Activated CD8-positive, alpha-beta memory T cell treated with anti-CD3 and anti-CD28 coated beads, Interleukin-2, amount 10 ng/mL, durations not matched to agents 7 days and 5 days (primary cell): ENCODE measurements at regions of chr3 and their contacts with region 1.

Region 1: GRCh38 chr3:99833617-99834205 is 16.0 kb downstream of the CMSS1 start:
- DNase-seq: no peak
- ATAC-seq: no peak
- H3K4me3 Mint-ChIP-seq: no peak overlapping the region
- H3K27ac Mint-ChIP-seq: no peak overlapping the region
- H3K4me1 Mint-ChIP-seq: peaks cover 10% of the 10 kb centered on the region
- H3K27me3 Mint-ChIP-seq: no peaks in the 10 kb centered on the region

Region 2: DNA sequence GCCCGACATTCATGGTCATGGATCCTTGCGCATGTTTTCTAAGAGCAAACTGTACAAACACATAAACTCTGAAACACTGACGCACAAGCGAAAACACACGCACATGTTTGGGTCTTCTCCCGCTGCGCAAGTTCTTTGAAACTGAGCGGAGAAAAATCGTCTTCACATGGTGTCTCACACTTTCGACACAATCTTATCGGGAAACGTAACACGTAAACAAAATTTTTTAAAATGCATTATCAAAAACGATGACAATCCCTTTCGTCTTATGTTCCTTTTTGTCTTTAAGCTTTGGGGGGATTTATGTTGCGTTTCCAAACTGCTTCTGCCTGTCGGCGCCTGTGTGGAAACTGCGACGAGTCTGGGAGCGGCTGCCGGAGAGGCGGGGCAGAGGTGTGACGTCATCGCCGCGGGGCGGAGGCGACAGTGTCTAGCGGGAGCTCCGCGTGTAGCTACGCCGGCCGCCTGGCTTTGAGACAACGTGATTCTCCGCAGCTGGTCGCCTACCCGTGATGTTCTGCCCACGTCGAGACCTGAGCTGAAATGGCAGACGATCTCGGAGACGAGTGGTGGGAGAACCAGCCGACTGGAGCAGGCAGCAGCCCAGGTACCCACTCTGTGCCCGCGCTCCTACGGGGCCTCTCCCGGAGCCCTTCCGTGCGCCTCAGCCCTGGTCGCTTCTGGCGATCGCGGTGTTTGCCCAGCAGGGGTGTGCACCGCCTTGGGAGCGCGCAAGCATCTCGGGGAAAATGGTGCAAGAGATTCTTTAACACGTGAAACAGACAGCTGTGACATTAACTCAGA is 16.1 kb before region 1 on chr3 and contains the start of gene CMSS1:
- CTCF ChIA-PET with region 1: interaction called, 15 read pairs
- DNase-seq: peak; percentile 96
- ATAC-seq: peak; percentile 97
- H3K4me3 Mint-ChIP-seq: peak within 1 kb of the TSS; percentile 100
- H3K27ac Mint-ChIP-seq: peak within 1 kb of the TSS; percentile 94
- H3K4me1 Mint-ChIP-seq: peaks cover 40% of the 10 kb centered on the region
- H3K27me3 Mint-ChIP-seq: no peaks in the 10 kb centered on the region
- total RNA-seq, gene CMSS1: 57.2 to 57.5 TPM

Region 3: GRCh38 chr3:99869621-99870020 is 35.9 kb after region 1 on chr3:
- CTCF ChIA-PET with region 1: interaction called, 10 read pairs
- DNase-seq: no peak
- ATAC-seq: no peak
- H3K4me3 Mint-ChIP-seq: no peak overlapping the region
- H3K27ac Mint-ChIP-seq: no peak overlapping the region
- H3K4me1 Mint-ChIP-seq: peaks cover 81% of the 10 kb centered on the region
- H3K27me3 Mint-ChIP-seq: no peaks in the 10 kb centered on the region

Region 4: GRCh38 chr3:100254168-100254777 is 420.6 kb after region 1 on chr3:
- CTCF ChIA-PET with region 1: interaction called, 65 read pairs
- DNase-seq: peak; percentile 72
- ATAC-seq: peak; percentile 92
- H3K4me3 Mint-ChIP-seq: no peak overlapping the region
- H3K27ac Mint-ChIP-seq: no peak overlapping the region
- H3K4me1 Mint-ChIP-seq: peaks cover 14% of the 10 kb centered on the region
- H3K27me3 Mint-ChIP-seq: no peaks in the 10 kb centered on the region

Region 5: DNA sequence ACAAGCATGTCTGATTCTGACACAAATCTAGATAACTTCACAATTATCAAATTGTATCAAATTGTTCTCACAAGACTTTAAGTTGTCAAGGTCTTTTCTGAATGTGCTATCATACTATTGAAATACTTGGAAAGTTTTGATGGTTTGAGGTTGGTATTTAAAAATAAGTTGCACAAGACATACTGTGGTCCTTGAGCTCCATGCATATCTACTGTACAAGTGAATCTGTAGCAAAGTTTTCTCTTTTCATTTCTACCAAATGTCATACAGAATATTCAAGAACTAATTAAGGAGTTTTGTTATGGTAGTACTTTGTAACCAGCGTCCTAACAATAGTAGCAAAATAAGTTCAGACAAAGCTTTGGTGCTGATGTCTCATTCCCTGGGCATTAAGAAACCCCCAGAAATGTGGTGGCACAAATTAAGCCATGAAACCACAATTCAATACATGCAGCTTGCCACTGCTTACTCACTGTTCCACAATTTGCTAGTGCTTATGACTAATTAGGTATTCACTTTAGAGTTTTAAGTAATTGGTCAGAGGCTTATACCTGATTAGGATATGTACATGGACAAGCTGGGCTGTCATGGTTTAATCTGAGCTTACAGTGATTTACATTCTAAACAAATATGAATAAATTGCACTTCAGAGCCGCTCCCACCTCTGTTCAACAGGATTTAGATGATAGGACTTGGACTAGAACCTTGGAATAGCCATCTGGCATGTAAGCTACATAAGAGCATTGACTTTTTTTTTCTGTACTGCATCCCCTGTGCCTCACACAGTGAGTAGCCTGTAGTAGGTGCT is 435.9 kb after region 1 on chr3:
- CTCF ChIA-PET with region 1: no interaction called
- DNase-seq: peak; percentile 44
- ATAC-seq: peak; percentile 60
- H3K4me3 Mint-ChIP-seq: no peak overlapping the region
- H3K27ac Mint-ChIP-seq: no peak overlapping the region
- H3K4me1 Mint-ChIP-seq: peaks cover 16% of the 10 kb centered on the region
- H3K27me3 Mint-ChIP-seq: no peaks in the 10 kb centered on the region